ENCODE measurements at regions of chr17 and their contacts with region 1.

Region 1: DNA sequence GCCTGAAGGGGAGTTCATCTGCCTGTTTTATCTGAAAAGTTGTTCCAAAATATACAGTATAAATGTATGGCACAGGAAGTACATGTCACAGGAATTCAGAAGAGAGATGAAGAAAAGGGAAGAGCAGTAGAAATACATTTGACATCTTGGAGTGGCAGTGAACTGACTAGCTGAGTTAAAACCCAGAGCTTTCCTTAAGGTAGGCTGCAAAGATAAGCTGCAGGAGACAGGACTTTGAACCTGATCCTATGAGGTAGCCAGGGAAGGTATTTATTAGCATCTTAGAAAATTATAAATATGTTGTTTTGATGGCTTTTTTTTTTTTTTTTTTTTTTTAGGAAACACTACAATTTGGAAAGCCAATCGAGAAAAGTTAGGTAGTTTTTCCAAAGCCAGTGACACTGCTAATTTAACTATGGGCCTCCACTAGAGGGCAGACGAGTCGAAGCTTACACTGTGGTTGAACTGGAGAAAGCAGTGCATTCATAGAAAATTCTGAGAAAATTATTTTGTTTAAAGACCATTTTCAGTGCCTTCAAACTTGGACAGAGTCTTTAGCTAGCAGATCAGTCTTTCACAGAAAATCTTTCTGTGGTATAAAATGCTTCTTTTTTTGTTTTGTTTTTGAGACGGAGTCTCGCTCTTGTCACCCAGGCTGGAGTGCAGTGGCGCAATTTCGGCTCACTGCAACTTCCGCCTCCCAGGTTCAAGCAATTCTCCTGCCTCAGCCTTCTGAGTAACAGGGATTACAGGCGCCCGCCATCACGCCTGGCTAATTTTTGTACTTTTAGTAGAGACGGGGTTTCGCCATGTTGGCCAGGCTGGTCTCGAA is 122.3 kb downstream of the SSH2 start:
- DNase-seq: peak; percentile 35
- ATAC-seq: peak; percentile 77

Region 2: DNA sequence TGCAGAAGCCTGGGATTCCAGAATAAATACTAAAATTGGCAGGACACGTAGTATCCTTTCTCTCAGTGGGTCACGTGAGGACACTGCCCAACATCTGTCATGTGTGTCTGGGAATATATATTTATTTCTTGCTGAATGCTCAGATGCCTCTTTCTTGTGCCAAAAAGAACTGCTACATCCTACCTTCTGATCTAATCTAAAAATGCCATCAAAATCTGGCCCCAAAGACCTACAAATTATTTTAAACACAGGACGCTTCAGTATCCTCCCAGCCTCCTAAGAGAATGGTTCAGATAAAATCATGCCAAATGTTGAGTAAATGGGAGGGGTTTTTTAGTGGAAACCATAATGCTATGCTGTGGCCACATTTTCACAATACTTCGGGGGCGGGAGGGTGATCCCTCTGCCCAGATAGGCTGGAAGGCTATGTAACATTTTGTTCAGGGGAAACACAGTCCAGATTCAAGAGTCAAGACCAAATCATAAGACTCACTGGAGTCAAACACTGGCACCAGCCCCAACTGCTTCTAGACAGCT is 162.2 kb before region 1 on chr17:
- intact Hi-C with region 1: no loop called
- DNase-seq: peak; percentile 78
- ATAC-seq: peak; percentile 83

Region 3: DNA sequence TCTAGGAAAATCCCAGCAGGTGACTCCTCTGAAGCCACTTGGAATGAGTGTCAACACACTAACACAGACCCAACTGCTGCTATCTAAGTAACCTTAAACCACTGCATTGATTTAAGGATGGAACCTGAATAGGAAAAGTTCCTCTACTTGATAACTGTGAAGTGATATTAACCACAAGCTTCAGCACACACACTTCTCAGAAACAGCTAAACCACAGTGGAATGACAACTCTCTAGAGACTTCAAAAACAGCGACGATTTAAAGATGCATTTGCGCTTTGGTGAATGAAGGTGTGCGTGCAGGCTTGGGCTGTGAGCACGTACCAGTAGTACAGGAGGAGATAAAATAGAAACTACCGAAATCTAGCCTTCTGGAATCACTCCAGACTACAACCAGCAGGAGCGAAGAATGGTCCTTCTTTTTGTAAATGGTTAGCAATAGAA is 47.4 kb before region 1 on chr17:
- intact Hi-C with region 1: no loop called
- DNase-seq: no peak
- ATAC-seq: peak; percentile 42

Region 4: DNA sequence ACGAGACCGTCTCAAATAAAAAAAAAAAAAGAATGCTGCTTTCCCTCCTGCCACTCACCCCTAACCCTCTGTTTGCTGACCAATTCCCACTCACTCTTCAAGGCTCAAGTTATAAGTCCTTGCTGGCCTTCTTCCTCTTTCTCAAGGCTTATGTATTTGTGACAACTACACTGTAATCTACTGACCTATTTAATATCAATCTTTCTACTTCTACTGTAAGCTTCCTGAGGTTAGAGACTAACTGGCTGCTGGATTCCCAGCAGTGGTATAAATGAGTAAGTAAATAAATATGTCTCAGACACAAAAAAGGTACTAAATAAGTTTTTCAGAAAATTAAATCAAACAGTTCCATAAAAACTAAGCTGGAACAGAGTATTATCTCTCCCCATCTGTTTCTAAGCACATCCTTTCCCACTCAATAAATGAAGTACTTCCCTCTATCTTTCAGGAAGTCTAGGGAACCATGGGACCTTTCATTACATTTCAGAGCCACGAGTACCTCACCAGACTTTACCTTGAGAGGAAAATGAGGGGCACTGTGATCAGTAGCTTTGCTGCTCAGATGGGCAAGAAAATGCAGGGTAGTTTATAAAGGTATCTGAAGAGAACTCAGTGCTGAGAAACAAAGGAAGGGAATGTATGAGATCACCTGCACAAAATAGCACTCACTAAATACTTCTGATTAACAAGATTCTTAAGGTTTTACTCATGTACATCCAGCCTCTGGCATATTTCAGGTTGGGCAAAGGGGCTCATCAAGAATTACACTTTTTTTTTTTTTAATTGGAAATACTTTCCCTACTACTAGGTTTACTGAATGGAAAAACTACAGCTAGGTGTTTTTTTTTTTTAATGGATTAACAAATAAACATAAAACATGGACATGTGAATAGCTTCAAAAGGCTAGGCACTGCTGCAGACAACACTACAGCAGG is 111.5 kb after region 1 on chr17:
- intact Hi-C with region 1: no loop called
- DNase-seq: no peak
- ATAC-seq: peak; percentile 31

Region 5: GRCh38 chr17:29931231-29931932 is 123.6 kb after region 1 on chr17:
- intact Hi-C with region 1: loop called (anchors 1 kb)
- DNase-seq: peak; percentile 60
- ATAC-seq: peak; percentile 75

Region 6: GRCh38 chr17:30091771-30092170 is 284.0 kb after region 1 on chr17:
- intact Hi-C with region 1: no loop called
- DNase-seq: no peak
- ATAC-seq: no peak